K562 (cell line): ENCODE measurements at regions of chr4 and their contacts with region 1.

Region 1: GRCh38 chr4:1289207-1290164 is at the start of gene MAEA:
- DNase-seq: peak; percentile 98 to 100 (median 98)
- ATAC-seq: peak; percentile 98
- H3K4me3 ChIP-seq: peak within 1 kb of the TSS; percentile 95
- H3K27ac ChIP-seq: peak within 1 kb of the TSS; percentile 88
- H3K4me1 ChIP-seq: peaks cover 11 to 39% of the 10 kb centered on the region in 2 experiments; a peak in 4 of 5 replicates
- H3K27me3 ChIP-seq: no peaks in the 10 kb centered on the region; a peak in 1 of 5 replicates
- CTCF ChIP-seq: no peak
- EP300 ChIP-seq: no peak
- POLR2A ChIP-seq: peak; percentile 94
- RAD21 ChIP-seq: no peak
- polyA plus RNA-seq, gene MAEA: 2.1 to 4.7 TPM

Region 2: GRCh38 chr4:1233641-1234308 is 55.7 kb before region 1 on chr4:
- CTCF ChIA-PET with region 1: no interaction called
- POLR2A ChIA-PET with region 1: no interaction called
- in situ Hi-C with region 1: no loop called
- intact Hi-C with region 1: no loop called
- DNase-seq: no peak
- ATAC-seq: peak; percentile 29; the same call in 2 of the 3 replicates
- H3K4me3 ChIP-seq: no peak overlapping the region
- H3K27ac ChIP-seq: no peak overlapping the region
- H3K4me1 ChIP-seq: peaks cover 0 to 8% of the 10 kb centered on the region in 2 experiments; a peak in 1 of 5 replicates
- H3K27me3 ChIP-seq: no peaks in the 10 kb centered on the region
- CTCF ChIP-seq: 0 out of 6 replicates have a peak, but pooled peaks of 1 of the 3 experiments have one; percentile 4
- EP300 ChIP-seq: no peak
- POLR2A ChIP-seq: no peak
- RAD21 ChIP-seq: no peak

Region 3: DNA sequence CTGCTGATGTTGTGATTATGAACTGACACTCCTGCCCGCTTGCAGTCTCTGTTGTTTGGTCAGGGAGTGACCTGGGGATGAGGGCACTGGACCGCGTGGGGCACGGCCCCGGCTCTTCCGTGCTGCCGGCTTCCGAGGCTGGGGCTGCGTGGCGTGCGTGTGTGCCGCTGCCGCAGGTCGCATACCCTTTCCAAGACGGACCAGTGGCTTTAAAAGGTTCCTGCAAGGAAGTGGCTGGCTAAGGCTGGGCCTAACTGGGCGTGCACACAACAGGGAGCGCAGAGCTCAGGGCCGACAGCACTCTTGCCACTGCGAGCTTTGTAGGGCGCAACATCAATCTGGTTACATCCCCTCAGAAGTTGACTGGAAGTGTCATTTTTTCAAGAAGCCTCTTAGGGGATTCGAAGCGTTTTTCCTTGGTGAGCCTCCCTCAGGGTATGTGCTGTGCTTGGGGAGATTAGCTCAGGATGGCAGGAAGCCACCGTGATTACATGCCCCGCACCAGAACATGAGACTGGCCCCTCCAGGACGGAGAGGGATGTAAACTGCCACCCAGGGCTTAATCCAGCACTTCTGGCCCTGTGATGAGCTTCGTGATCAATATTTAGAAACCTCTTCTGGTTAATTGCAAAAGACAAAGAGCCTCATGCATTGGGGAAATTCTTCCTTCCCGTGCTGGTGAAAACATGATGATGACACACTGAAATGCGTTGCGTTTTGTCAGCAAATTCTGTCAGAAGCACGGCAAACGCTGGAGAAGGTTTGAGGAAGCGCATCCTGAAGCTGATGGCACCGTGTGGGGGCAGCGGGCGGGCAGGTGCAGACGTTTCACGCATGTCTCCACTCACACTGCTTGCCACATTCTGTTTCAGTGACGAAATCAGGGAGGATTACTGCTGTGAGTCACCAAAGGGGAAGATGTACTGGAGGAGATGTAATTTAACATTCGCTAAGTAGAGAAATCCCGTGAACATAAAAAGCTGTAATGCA is 11.3 kb after region 1 on chr4:
- CTCF ChIA-PET with region 1: no interaction called
- POLR2A ChIA-PET with region 1: interaction called, 30 read pairs
- in situ Hi-C with region 1: no loop called
- intact Hi-C with region 1: no loop called
- DNase-seq: no peak
- ATAC-seq: no peak
- H3K4me3 ChIP-seq: no peak overlapping the region
- H3K27ac ChIP-seq: no peak overlapping the region
- H3K4me1 ChIP-seq: peaks cover 0 to 12% of the 10 kb centered on the region in 2 experiments; a peak in 4 of 5 replicates
- H3K27me3 ChIP-seq: no peaks in the 10 kb centered on the region
- CTCF ChIP-seq: no peak
- EP300 ChIP-seq: no peak
- POLR2A ChIP-seq: no peak
- RAD21 ChIP-seq: no peak

Region 4: GRCh38 chr4:1309261-1310010 is 19.9 kb after region 1 on chr4:
- CTCF ChIA-PET with region 1: no interaction called
- POLR2A ChIA-PET with region 1: interaction called, 11 read pairs
- in situ Hi-C with region 1: no loop called
- intact Hi-C with region 1: no loop called
- DNase-seq: peak; percentile 85 to 90 (median 88)
- ATAC-seq: peak; percentile 99
- H3K4me3 ChIP-seq: no peak overlapping the region; the same call in 1 of the 2 replicates
- H3K27ac ChIP-seq: peak overlapping the region; percentile 59; the same call in 2 of the 3 replicates
- H3K4me1 ChIP-seq: peaks cover 4 to 44% of the 10 kb centered on the region in 2 experiments; a peak in 4 of 5 replicates
- H3K27me3 ChIP-seq: no peaks in the 10 kb centered on the region; a peak in 1 of 5 replicates
- CTCF ChIP-seq: no peak
- EP300 ChIP-seq: no peak
- POLR2A ChIP-seq: no peak
- RAD21 ChIP-seq: no peak

Region 5: DNA sequence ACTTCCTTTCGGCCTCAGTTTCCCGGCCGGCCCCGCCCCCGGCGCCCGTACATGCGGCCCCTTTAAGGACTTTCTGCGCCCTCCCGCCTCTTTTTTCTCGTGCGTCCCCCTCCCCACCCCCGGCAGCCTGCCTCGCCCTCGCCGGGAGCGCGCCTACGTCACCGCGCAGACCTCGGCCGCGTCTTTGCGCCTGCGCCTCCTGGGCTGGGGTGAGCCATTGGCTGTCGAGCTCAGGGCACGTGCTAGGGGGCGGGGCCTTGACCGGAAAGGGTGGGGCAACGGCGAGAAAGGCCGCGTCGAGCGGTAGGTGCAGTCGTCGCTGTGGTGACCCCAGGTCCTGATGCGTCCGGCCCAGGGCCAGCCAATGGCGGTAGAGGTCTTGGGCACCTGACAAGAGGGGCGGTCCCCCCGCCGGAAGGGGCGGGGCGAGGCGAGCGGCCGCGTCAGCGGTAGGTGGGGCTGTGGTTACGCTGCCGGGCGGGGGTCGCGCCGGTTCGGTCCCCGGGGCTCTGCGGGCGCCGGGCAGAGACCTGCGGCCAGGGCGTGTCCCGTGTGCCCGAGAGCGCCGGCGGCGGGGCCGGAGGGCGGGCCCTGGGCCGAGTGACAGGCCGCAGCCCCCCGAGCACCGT is 57.4 kb after region 1 on chr4 and contains the start of gene UVSSA:
- CTCF ChIA-PET with region 1: no interaction called
- POLR2A ChIA-PET with region 1: interaction called, 8 read pairs
- in situ Hi-C with region 1: no loop called
- intact Hi-C with region 1: loop called (anchors 2 kb)
- DNase-seq: peak; percentile 98 to 100 (median 99)
- ATAC-seq: peak; percentile 95
- H3K4me3 ChIP-seq: peak within 1 kb of the TSS; percentile 95
- H3K27ac ChIP-seq: peak within 1 kb of the TSS; percentile 95
- H3K4me1 ChIP-seq: peaks cover 10 to 55% of the 10 kb centered on the region in 2 experiments
- H3K27me3 ChIP-seq: no peaks in the 10 kb centered on the region
- CTCF ChIP-seq: no peak
- EP300 ChIP-seq: no peak
- POLR2A ChIP-seq: peak; percentile 39; the same call in 1 of the 2 replicates
- RAD21 ChIP-seq: no peak
- polyA plus RNA-seq, gene UVSSA: 0.21 to 0.27 TPM

Region 6: DNA sequence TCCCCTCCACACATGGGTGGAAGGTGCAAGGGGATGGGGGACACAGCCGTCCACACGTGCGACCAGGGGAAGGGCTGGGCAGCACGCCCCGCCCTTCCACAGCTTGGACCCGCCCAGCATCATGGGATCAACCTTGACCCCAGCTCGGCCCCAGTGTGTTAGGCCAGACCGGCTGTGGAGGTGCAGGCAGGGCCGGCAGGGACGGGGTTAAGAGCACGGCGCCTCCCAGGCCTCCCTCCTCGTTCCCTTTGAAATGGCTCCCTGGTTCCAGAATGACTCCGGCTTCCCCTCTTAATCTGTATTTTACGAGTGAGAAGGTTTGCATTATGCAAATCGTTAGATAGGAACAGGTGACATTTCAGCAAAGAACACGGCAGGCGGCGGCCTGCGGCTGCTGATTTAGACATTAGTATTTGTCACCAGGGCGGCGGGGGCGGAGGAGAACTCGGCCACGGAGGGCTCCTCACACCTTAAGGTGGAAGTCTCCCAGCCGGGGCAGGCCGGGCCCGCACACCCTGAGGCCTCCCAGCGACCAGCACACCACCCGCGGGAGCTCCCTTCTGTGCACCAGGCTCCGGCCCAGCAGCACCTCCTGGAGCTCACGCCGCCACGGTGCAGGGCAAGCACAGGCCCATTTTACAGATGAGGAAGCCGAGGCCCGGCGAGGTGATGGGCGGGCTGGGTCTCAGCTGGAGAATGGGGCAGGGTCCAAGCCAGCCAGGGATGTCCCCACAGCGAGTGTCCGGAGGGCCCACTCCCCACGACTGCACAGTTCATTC is 278.5 kb after region 1 on chr4:
- CTCF ChIA-PET with region 1: no interaction called
- POLR2A ChIA-PET with region 1: no interaction called
- in situ Hi-C with region 1: no loop called
- intact Hi-C with region 1: no loop called
- DNase-seq: peak; percentile 42 to 49 (median 46)
- ATAC-seq: peak; percentile 59
- H3K4me3 ChIP-seq: no peak overlapping the region
- H3K27ac ChIP-seq: no peak overlapping the region
- H3K4me1 ChIP-seq: peaks cover 7 to 84% of the 10 kb centered on the region in 2 experiments; a peak in 4 of 5 replicates
- H3K27me3 ChIP-seq: peaks cover 2 to 8% of the 10 kb centered on the region in 2 experiments; a peak in 4 of 5 replicates
- CTCF ChIP-seq: peak; percentile 23 to 41 (median 30); a peak in 4 of 6 replicates
- EP300 ChIP-seq: no peak
- POLR2A ChIP-seq: no peak
- RAD21 ChIP-seq: no peak